ENCODE measurements at regions of chr9 and their contacts with region 1.

Region 1: DNA sequence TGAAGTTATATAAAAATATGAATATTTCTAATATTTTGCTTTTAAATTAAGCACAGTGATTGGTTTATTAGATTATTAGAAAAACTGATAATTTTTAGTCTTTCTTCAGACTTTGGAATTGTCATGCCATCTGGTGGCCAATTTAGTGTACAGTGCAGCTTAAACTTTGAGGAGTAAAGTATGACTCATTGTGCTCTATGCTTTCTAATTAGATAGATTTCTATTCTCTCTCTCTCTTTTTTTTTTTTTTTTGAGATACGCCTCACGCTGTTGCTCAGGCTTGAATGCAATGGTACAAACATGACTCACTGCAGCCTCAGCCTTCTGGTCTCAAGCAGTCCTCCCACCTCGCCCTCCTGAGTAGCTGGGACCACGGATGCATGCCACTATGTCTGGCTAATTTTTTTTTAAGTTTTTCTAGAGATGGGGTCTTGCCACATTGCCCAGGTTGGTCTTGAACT is 42.1 kb upstream of the GPR21 start:
- DNase-seq: peak; percentile 52
- ATAC-seq: peak; percentile 58
- H3K4me3 ChIP-seq: no peak overlapping the region
- H3K4me3 Mint-ChIP-seq: no peak overlapping the region
- H3K27ac ChIP-seq: no peak overlapping the region
- H3K27ac Mint-ChIP-seq: no peak overlapping the region
- H3K4me1 ChIP-seq: no peaks in the 10 kb centered on the region
- H3K4me1 Mint-ChIP-seq: peaks cover 3% of the 10 kb centered on the region
- H3K27me3 ChIP-seq: no peaks in the 10 kb centered on the region
- H3K27me3 Mint-ChIP-seq: no peaks in the 10 kb centered on the region
- CTCF ChIP-seq: peak; percentile 81

Region 2: GRCh38 chr9:123008909-123009308 is 17.5 kb after region 1 on chr9:
- CTCF ChIA-PET with region 1: interaction called, 10 read pairs
- POLR2A ChIA-PET with region 1: no interaction called
- intact Hi-C with region 1: no loop called
- DNase-seq: no peak
- ATAC-seq: no peak
- H3K4me3 ChIP-seq: no peak overlapping the region
- H3K4me3 Mint-ChIP-seq: no peak overlapping the region
- H3K27ac ChIP-seq: no peak overlapping the region
- H3K27ac Mint-ChIP-seq: no peak overlapping the region
- H3K4me1 ChIP-seq: no peaks in the 10 kb centered on the region
- H3K4me1 Mint-ChIP-seq: no peaks in the 10 kb centered on the region
- H3K27me3 ChIP-seq: no peaks in the 10 kb centered on the region
- H3K27me3 Mint-ChIP-seq: no peaks in the 10 kb centered on the region
- CTCF ChIP-seq: no peak

Region 3: GRCh38 chr9:123150708-123151503 is 159.5 kb after region 1 on chr9:
- CTCF ChIA-PET with region 1: no interaction called
- POLR2A ChIA-PET with region 1: no interaction called
- intact Hi-C with region 1: no loop called
- DNase-seq: no peak
- ATAC-seq: no peak
- H3K4me3 ChIP-seq: no peak overlapping the region
- H3K4me3 Mint-ChIP-seq: no peak overlapping the region
- H3K27ac ChIP-seq: no peak overlapping the region
- H3K27ac Mint-ChIP-seq: no peak overlapping the region
- H3K4me1 ChIP-seq: no peaks in the 10 kb centered on the region
- H3K4me1 Mint-ChIP-seq: no peaks in the 10 kb centered on the region
- H3K27me3 ChIP-seq: no peaks in the 10 kb centered on the region
- H3K27me3 Mint-ChIP-seq: no peaks in the 10 kb centered on the region
- CTCF ChIP-seq: no peak

Measured in B cell (primary cell).